ENCODE measurements at regions of chr7 and their contacts with region 1.

Region 1: GRCh38 chr7:66033471-66034385 is 41.9 kb upstream of the ASL start:
- DNase-seq: no peak
- ATAC-seq: no peak
- H3K4me3 ChIP-seq: no peak overlapping the region
- H3K27ac ChIP-seq: no peak overlapping the region
- H3K4me1 ChIP-seq: no peaks in the 10 kb centered on the region
- H3K27me3 ChIP-seq: no peaks in the 10 kb centered on the region
- CTCF ChIP-seq: no peak

Region 2: GRCh38 chr7:66265566-66265965 is 231.8 kb after region 1 on chr7:
- intact Hi-C with region 1: no loop called
- DNase-seq: no peak
- ATAC-seq: no peak
- H3K4me3 ChIP-seq: no peak overlapping the region
- H3K27ac ChIP-seq: no peak overlapping the region
- H3K4me1 ChIP-seq: no peaks in the 10 kb centered on the region
- H3K27me3 ChIP-seq: no peaks in the 10 kb centered on the region
- CTCF ChIP-seq: no peak

Region 3: DNA sequence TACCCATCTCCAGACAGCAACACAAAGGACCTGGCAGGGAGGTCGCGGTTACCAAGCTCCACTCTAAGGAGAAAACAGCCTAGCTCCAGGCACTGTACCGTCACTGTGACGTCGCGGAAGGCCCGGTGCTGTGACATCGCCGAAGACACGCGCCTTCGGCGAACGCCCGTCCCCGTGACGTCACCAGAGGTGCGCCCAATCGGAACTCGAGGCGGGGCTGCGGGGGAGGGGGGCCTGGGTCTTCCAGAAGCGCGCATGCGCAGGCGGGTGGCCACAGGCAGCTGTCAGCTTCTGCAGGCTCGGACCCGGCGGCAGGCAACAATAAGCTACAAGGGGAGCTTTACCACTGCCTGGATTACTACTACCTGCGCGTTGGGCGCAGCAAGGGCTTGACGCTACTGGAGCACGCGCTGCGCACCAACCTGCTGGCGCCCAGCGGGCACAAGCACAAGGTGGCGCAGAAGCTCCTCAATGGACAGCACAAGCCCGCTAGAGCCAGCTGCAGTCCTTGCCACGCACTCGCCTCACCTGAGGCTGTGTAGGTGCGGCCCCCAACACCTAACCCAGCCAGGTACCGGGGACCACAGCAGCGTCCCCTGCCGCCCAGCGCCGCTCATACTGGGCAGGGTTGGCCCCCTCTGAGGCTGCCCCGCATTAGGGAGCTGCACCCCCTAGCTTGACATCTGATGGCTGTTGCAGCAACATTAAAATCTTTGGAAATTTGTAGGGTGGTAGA is 379.8 kb after region 1 on chr7:
- intact Hi-C with region 1: loop called (anchors 10 kb)
- DNase-seq: peak; percentile 82 to 90
- ATAC-seq: peak; percentile 70 to 87 (median 85)
- H3K4me3 ChIP-seq: peak overlapping the region; percentile 75
- H3K27ac ChIP-seq: peak overlapping the region; percentile 78
- H3K4me1 ChIP-seq: peaks cover 12% of the 10 kb centered on the region
- H3K27me3 ChIP-seq: no peaks in the 10 kb centered on the region
- CTCF ChIP-seq: peak; percentile 34